ENCODE measurements at regions of chr19 and their contacts with region 1.

Region 1: DNA sequence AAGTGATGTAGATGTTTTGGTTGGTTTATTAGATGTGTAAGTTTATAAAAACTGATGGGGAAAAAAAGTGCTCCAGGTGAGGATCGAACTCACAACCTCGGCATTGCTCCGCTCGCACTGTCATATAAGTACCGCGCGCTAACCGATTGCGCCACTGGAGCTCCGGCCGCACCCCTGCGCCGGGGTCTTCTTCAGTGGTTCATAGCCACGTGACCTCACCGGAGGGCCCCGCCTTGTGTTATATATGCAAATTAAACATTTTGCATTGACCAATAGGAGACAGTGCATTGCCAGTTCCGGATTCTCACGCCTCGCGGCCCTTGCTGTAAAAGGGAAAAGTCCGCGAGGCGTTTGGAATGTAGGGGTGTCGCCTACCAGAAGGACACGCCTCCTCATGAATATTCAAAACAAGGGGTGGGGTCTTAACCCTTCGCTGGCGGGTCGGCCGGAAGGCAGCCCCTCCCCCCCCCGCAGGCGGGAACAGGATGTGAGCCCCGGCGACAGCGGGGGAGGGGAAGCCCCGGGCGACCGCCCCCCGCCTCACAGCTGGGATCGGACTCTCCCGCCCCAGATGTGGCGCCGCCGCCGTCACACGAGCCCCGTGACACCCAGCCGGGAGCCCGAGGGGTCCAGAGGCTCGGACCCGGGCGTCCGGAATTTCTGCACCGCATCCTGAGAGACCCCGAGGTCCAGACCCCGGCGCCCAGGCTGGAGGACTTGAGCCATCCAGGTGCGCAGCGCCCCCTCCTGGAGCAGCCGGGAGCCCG is at the start of gene PLEKHG2:
- DNase-seq: peak; percentile 98
- ATAC-seq: peak; percentile 73
- H3K4me3 Mint-ChIP-seq: peak within 1 kb of the TSS; percentile 73
- H3K27ac Mint-ChIP-seq: peak within 1 kb of the TSS; percentile 92
- H3K4me1 Mint-ChIP-seq: peaks cover 32% of the 10 kb centered on the region
- H3K27me3 Mint-ChIP-seq: no peaks in the 10 kb centered on the region
- total RNA-seq, gene PLEKHG2: 46.0 to 65.5 TPM

Region 2: DNA sequence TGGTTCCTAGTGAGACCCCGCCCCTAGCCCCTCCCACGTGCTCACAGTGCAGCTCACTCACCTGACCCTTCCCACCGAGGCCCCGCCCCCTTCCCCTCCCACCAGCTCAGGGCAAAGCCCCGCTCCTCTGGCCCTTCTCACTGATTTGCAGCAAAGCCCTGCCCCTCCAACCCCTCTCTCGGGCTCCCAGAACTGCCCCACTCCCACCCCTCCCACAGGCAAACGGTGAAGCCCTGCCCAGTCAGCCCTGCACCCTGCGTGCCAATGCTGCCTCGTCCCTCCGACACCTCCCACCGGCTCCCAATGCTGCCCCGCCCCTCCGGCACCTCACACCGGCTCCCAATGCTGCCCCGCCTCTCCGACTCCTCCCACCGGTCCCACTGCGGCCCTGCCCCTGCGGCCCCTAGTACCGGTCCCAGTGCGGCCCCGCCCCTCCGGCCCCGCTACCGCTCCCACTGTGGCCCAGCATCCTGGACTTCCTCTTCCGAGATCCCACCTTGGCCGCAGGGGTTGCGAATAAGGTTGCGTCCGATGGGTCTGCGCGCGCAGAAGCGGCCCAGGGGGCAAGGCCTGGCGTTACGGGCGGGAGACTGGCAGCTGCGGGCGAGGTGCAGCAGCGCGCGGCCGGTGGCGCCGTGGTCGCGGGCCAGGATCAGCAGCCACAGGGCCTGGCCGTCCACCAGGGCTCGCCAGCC is 380.8 kb before region 1 on chr19:
- CTCF ChIA-PET with region 1: no interaction called
- POLR2A ChIA-PET with region 1: no interaction called
- intact Hi-C with region 1: loop called in 1 of 2 experiments (anchors 1 kb)
- DNase-seq: peak; percentile 91
- ATAC-seq: peak; percentile 97
- H3K4me3 Mint-ChIP-seq: peak overlapping the region; percentile 58
- H3K27ac Mint-ChIP-seq: no peak overlapping the region
- H3K4me1 Mint-ChIP-seq: peaks cover 5% of the 10 kb centered on the region
- H3K27me3 Mint-ChIP-seq: peaks cover 24% of the 10 kb centered on the region

Region 3: GRCh38 chr19:39160334-39160791 is 251.9 kb before region 1 on chr19:
- CTCF ChIA-PET with region 1: no interaction called
- POLR2A ChIA-PET with region 1: no interaction called
- intact Hi-C with region 1: no loop called
- DNase-seq: no peak
- ATAC-seq: no peak
- H3K4me3 Mint-ChIP-seq: no peak overlapping the region
- H3K27ac Mint-ChIP-seq: no peak overlapping the region
- H3K4me1 Mint-ChIP-seq: peaks cover 16% of the 10 kb centered on the region
- H3K27me3 Mint-ChIP-seq: no peaks in the 10 kb centered on the region

Region 4: GRCh38 chr19:39212375-39212742 is 199.9 kb before region 1 on chr19:
- CTCF ChIA-PET with region 1: no interaction called
- POLR2A ChIA-PET with region 1: no interaction called
- intact Hi-C with region 1: loop called (anchors 1 kb)
- DNase-seq: peak; percentile 86
- ATAC-seq: peak; percentile 100
- H3K4me3 Mint-ChIP-seq: no peak overlapping the region
- H3K27ac Mint-ChIP-seq: no peak overlapping the region
- H3K4me1 Mint-ChIP-seq: no peaks in the 10 kb centered on the region
- H3K27me3 Mint-ChIP-seq: peaks cover 9% of the 10 kb centered on the region

Region 5: GRCh38 chr19:39351537-39352064 is 60.7 kb before region 1 on chr19:
- CTCF ChIA-PET with region 1: interaction called, 4 read pairs
- POLR2A ChIA-PET with region 1: no interaction called
- intact Hi-C with region 1: loop called in 1 of 2 experiments (anchors 1 kb)
- DNase-seq: peak; percentile 77
- ATAC-seq: peak; percentile 94
- H3K4me3 Mint-ChIP-seq: no peak overlapping the region
- H3K27ac Mint-ChIP-seq: peak overlapping the region; percentile 89
- H3K4me1 Mint-ChIP-seq: peaks cover 44% of the 10 kb centered on the region
- H3K27me3 Mint-ChIP-seq: no peaks in the 10 kb centered on the region

Region 6: GRCh38 chr19:39397360-39398296 is 14.7 kb before region 1 on chr19:
- CTCF ChIA-PET with region 1: interaction called, 79 read pairs
- POLR2A ChIA-PET with region 1: interaction called, 42 read pairs
- intact Hi-C with region 1: loop called (anchors 1 kb)
- DNase-seq: peak; percentile 97
- ATAC-seq: peak; percentile 58
- H3K4me3 Mint-ChIP-seq: peak overlapping the region; percentile 52
- H3K27ac Mint-ChIP-seq: peak overlapping the region; percentile 97
- H3K4me1 Mint-ChIP-seq: peaks cover 59% of the 10 kb centered on the region
- H3K27me3 Mint-ChIP-seq: no peaks in the 10 kb centered on the region

Region 7: DNA sequence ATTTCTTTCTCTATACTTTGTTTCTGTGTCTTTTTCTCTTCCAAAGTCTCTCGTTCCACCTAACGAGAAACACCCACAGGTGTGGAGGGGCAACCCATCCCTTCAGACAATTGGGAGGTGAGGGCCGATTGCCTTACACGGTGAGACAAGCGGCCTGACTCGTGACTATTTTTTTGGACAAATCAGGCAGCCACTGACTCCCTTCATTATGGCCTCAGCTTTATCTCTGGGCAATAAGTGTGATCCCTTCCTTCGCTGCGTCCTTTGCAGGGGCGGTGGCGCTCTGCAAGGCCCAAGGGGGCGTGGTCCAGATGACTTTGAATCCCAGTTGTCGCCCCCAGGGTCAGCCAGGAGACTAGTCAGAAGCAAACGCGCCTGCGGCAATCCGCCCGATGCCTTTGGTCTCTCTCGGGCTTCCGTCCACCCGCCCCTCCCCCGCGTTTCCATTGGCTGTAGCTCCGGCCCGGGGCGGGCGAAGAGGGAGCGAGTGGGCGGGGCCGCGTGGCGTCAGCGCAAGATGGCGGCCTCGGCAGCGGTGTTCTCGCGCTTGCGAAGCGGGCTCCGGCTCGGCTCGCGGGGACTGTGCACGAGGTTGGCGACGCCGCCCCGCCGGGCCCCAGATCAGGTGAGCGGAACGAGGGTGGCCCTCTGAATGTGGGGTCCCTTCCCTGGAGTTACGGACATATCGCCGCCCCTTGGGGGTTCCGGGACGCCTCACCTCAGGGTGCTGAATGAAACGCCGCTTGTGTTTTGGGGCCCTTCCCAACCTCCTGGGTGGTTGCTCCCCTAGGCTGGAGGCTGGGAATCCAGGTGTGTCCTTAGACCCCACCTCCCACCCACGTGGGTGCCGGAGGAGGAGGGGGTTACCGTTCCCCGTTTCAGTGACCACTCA is 68.3 kb after region 1 on chr19 and contains the start of gene TIMM50:
- CTCF ChIA-PET with region 1: no interaction called
- POLR2A ChIA-PET with region 1: no interaction called
- intact Hi-C with region 1: loop called in 1 of 2 experiments (anchors 1 kb)
- DNase-seq: peak; percentile 100
- ATAC-seq: peak; percentile 94
- H3K4me3 Mint-ChIP-seq: peak within 1 kb of the TSS; percentile 95
- H3K27ac Mint-ChIP-seq: peak within 1 kb of the TSS; percentile 92
- H3K4me1 Mint-ChIP-seq: peaks cover 24% of the 10 kb centered on the region
- H3K27me3 Mint-ChIP-seq: no peaks in the 10 kb centered on the region
- total RNA-seq, gene TIMM50: 99.4 to 126 TPM

Region 8: GRCh38 chr19:39539519-39540332 is 127.4 kb after region 1 on chr19 and contains the start of gene EID2:
- CTCF ChIA-PET with region 1: no interaction called
- POLR2A ChIA-PET with region 1: no interaction called
- intact Hi-C with region 1: loop called in 1 of 2 experiments (anchors 1 kb)
- DNase-seq: peak; percentile 98
- ATAC-seq: peak; percentile 80
- H3K4me3 Mint-ChIP-seq: peak within 1 kb of the TSS; percentile 84
- H3K27ac Mint-ChIP-seq: peak within 1 kb of the TSS; percentile 94
- H3K4me1 Mint-ChIP-seq: peaks cover 53% of the 10 kb centered on the region
- H3K27me3 Mint-ChIP-seq: no peaks in the 10 kb centered on the region
- total RNA-seq, gene EID2: 9.0 to 10.7 TPM

Region 9: DNA sequence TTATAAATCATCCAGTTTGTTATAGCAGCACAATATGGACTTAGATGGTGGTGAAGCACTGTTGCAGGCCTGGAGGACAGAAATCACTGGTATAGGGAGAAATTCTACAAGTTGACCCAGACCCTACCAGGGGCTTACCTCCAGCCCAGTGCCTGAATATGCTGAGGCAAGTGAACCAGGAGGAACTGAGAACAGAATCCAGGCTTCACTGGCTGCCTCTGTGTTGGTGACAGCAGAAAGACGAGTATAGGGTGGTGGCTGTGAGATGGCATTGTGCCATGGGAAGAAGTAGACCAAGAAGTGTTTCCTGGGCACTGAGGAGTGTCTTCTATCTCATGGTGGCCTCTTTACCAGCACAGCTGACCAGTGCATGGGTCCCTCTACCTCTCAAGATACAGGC is 143.6 kb after region 1 on chr19:
- CTCF ChIA-PET with region 1: no interaction called
- POLR2A ChIA-PET with region 1: no interaction called
- intact Hi-C with region 1: no loop called
- DNase-seq: no peak
- ATAC-seq: no peak
- H3K4me3 Mint-ChIP-seq: no peak overlapping the region
- H3K27ac Mint-ChIP-seq: no peak overlapping the region
- H3K4me1 Mint-ChIP-seq: peaks cover 29% of the 10 kb centered on the region
- H3K27me3 Mint-ChIP-seq: no peaks in the 10 kb centered on the region

Measured in activated CD4-positive, alpha-beta T cell treated with anti-CD3 and anti-CD28 coated beads for 36 hours (primary cell).